ENCODE measurements at regions of chr17 and their contacts with region 1.

Region 1: DNA sequence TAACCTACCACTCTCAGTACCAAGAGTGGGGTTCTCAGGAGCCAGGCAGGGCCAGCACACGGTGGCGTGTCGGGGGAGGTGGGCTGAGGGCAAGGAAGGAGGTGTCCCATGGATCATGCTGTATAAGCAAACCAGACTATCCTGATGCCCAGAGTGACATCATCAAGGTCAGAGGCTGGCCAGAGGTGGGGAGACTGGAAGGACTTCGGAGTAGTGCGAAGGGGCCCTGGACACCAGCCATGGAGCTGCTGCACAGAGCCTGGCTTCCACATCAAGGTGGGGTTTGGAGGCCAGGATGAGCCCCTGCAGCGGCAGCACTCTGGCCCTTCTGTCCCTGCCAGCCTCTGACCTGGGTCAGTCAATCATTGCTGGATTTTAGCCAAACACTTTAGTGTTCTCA is 34.9 kb downstream of the MED13 start:
- DNase-seq: no peak
- ATAC-seq: peak in 1 of 4 donors; percentile 21
- H3K4me3 ChIP-seq: no peak overlapping the region
- H3K27ac ChIP-seq: no peak overlapping the region
- H3K4me1 ChIP-seq: peaks cover 21% of the 10 kb centered on the region
- H3K27me3 ChIP-seq: no peaks in the 10 kb centered on the region
- CTCF ChIP-seq: no peak

Region 2: GRCh38 chr17:61946359-61946758 is 83.8 kb before region 1 on chr17:
- intact Hi-C with region 1: loop called in 1 of 2 experiments (anchors 10 kb)
- DNase-seq: no peak
- ATAC-seq: no peak
- H3K4me3 ChIP-seq: no peak overlapping the region
- H3K27ac ChIP-seq: no peak overlapping the region
- H3K4me1 ChIP-seq: peaks cover 5% of the 10 kb centered on the region
- H3K27me3 ChIP-seq: no peaks in the 10 kb centered on the region
- CTCF ChIP-seq: no peak

Region 3: DNA sequence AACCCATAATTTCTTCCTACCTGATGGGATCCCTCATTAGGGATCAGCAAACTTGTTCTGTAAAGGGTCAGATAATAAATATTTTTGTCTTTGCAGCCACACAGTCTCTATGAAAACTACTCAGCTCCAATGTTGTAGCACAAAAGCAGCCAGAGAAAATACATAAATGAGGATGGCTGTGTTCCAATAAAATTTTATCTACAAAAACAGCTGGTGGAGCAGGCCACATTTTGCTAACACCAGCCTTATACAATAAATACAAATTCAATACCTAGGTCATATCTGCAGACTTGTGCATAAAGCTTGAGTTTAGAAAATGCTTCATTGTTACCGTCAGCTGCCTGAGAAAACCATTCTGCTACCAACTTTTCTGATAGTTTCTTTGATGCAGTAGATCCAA is 64.0 kb before region 1 on chr17:
- intact Hi-C with region 1: no loop called
- DNase-seq: no peak
- ATAC-seq: no peak
- H3K4me3 ChIP-seq: no peak overlapping the region
- H3K27ac ChIP-seq: no peak overlapping the region
- H3K4me1 ChIP-seq: no peaks in the 10 kb centered on the region
- H3K27me3 ChIP-seq: no peaks in the 10 kb centered on the region
- CTCF ChIP-seq: no peak